ENCODE measurements at regions of chr17 and their contacts with region 1.

Region 1: GRCh38 chr17:39244600-39245570 is 19.1 kb upstream of the STAC2 start:
- DNase-seq: peak; percentile 72 to 88 (median 81)
- H3K4me3 ChIP-seq: no peak overlapping the region
- H3K4me3 Mint-ChIP-seq: peak overlapping the region in 4 of 7 donors; percentile 41 to 55 (median 46)
- H3K27ac ChIP-seq: no peak overlapping the region
- H3K27ac Mint-ChIP-seq: peak overlapping the region in 7 of 8 donors; percentile 38 to 90 (median 54)
- H3K4me1 ChIP-seq: peaks cover 9% of the 10 kb centered on the region
- H3K4me1 Mint-ChIP-seq: peaks cover 9 to 14% (median 11%) of the 10 kb centered on the region in 3 donors
- H3K27me3 ChIP-seq: no peaks in the 10 kb centered on the region
- H3K27me3 Mint-ChIP-seq: peaks cover 2 to 7% of the 10 kb centered on the region in 2 donors

Region 2: GRCh38 chr17:39209317-39210092 is 35.4 kb before region 1 on chr17:
- CTCF ChIA-PET with region 1: interaction called, 272 read pairs
- POLR2A ChIA-PET with region 1: interaction called, 17 read pairs
- DNase-seq: peak; percentile 64 to 88 (median 70)
- H3K4me3 ChIP-seq: peak overlapping the region; percentile 39
- H3K4me3 Mint-ChIP-seq: peak overlapping the region; percentile 30 to 85 (median 59)
- H3K27ac ChIP-seq: no peak overlapping the region
- H3K27ac Mint-ChIP-seq: peak overlapping the region in 7 of 8 donors; percentile 39 to 92 (median 77)
- H3K4me1 ChIP-seq: peaks cover 25% of the 10 kb centered on the region
- H3K4me1 Mint-ChIP-seq: peaks cover 13 to 35% (median 20%) of the 10 kb centered on the region in 3 donors
- H3K27me3 ChIP-seq: peaks cover 4% of the 10 kb centered on the region
- H3K27me3 Mint-ChIP-seq: peaks cover 0 to 5% of the 10 kb centered on the region in 2 donors

Measured in CD8-positive, alpha-beta memory T cell (primary cell).